Heart left ventricle (tissue), 16 donors: ENCODE measurements at regions of chr7 and their contacts with region 1.

Region 1: GRCh38 chr7:47179812-47180515 is 401.9 kb downstream of the TNS3 start:
- DNase-seq: peak in 3 of 5 donors; percentile 43 to 51 (median 49)
- ATAC-seq: peak in 2 of 4 donors; percentile 47 to 73
- H3K4me3 ChIP-seq: no peak overlapping the region
- H3K27ac ChIP-seq: no peak overlapping the region
- H3K4me1 ChIP-seq: peaks cover 0 to 46% (median 13%) of the 10 kb centered on the region in 12 donors
- H3K27me3 ChIP-seq: no peaks in the 10 kb centered on the region
- CTCF ChIP-seq: peak; percentile 59 to 92 (median 90)
- POLR2A ChIP-seq: no peak

Region 2: DNA sequence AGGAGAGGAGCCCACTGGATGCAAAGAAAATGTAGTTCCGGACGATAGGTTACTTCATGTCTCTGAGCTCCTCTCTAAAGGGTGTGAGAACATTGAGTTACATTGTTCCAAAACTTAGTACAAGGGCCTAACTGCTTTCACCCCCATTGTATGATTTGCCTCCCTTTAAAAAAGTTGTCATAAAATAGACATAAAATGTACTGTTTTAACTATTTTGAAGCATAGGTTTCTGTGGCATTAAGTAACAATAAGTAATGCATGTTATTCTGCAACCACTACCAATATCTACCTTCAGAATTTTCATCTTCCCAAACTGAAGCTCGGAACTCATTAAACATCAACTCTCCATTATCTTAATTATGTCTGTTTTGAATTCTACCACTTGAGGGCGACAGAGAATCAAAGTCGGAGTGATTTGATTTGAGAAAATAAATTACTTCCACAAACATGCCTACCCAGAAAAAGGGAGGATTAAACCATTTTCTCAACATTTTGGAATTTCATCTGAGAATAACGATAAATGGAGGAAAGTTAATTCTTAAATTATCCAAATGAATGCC is 1289.0 kb before region 1 on chr7:
- intact Hi-C with region 1: loop called in 1 of 10 experiments (anchors 2 kb)
- DNase-seq: no peak
- ATAC-seq: no peak
- H3K4me3 ChIP-seq: no peak overlapping the region
- H3K27ac ChIP-seq: no peak overlapping the region
- H3K4me1 ChIP-seq: peaks cover 0 to 11% (median 5%) of the 10 kb centered on the region in 12 donors
- H3K27me3 ChIP-seq: peaks cover 8 to 53% (median 28%) of the 10 kb centered on the region in 9 donors
- CTCF ChIP-seq: peak; percentile 47 to 79 (median 62)
- POLR2A ChIP-seq: no peak

Region 3: GRCh38 chr7:46352004-46352954 is 827.7 kb before region 1 on chr7:
- intact Hi-C with region 1: loop called in 6 of 10 experiments (anchors 5 to 10 kb)
- DNase-seq: peak in 3 of 5 donors; percentile 20 to 45 (median 23)
- ATAC-seq: peak in 2 of 4 donors; percentile 58 to 74
- H3K4me3 ChIP-seq: no peak overlapping the region
- H3K27ac ChIP-seq: no peak overlapping the region
- H3K4me1 ChIP-seq: no peaks in the 10 kb centered on the region
- H3K27me3 ChIP-seq: peaks cover 0 to 3% (median 0%) of the 10 kb centered on the region in 9 donors
- CTCF ChIP-seq: peak; percentile 37 to 77 (median 68)
- POLR2A ChIP-seq: no peak

Region 4: DNA sequence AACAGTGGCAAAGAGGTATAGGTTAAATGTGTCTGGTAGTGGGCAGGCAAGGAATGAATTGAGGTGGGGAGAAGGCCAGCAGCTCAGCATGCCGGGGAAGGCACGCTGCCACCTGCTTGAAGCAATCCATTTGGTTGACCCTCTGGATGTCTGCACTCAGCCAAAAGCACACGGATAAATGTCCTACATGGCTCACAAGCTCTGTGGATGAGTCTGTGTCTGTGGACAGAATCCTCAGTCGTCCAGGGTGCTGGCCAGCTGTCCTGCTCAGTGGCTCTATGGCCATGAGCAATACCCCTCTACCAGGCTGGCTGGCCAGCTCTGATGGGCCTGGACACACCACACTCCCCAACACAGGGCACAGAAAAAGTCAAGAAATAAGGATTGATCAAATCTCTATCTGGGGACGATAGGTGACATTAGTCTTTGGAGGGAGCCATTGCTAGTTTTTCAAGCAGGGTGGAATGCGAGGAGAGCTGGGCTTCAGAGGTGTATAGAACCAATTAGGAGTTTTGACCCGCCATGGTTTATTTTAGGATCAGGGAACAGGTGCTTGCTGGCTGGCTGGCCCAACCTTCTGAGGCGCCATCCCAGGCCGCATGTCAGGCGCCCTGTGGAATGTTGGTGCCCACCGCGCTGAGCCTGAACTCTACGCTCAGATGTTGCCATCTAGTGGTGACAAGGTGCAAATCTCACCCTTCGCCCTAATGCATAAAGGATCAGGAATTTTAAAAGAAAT is 91.5 kb before region 1 on chr7:
- intact Hi-C with region 1: no loop called
- DNase-seq: peak; percentile 41 to 77 (median 62)
- ATAC-seq: peak; percentile 80 to 94 (median 90)
- H3K4me3 ChIP-seq: no peak overlapping the region
- H3K27ac ChIP-seq: peak overlapping the region in 1 of 12 donors; percentile 39
- H3K4me1 ChIP-seq: peaks cover 0 to 12% (median 3%) of the 10 kb centered on the region in 12 donors
- H3K27me3 ChIP-seq: no peaks in the 10 kb centered on the region
- CTCF ChIP-seq: peak; percentile 77 to 96 (median 92)
- POLR2A ChIP-seq: no peak

Region 5: GRCh38 chr7:47100817-47101435 is 79.0 kb before region 1 on chr7:
- intact Hi-C with region 1: loop called in 1 of 10 experiments (anchors 5 kb)
- DNase-seq: peak in 3 of 5 donors; percentile 36 to 37 (median 36)
- ATAC-seq: peak in 3 of 4 donors; percentile 53 to 59 (median 57)
- H3K4me3 ChIP-seq: no peak overlapping the region
- H3K27ac ChIP-seq: no peak overlapping the region
- H3K4me1 ChIP-seq: peaks cover 0 to 6% (median 0%) of the 10 kb centered on the region in 12 donors
- H3K27me3 ChIP-seq: no peaks in the 10 kb centered on the region
- CTCF ChIP-seq: peak in 11 of 12 donors; percentile 31 to 59 (median 45)
- POLR2A ChIP-seq: no peak

Region 6: DNA sequence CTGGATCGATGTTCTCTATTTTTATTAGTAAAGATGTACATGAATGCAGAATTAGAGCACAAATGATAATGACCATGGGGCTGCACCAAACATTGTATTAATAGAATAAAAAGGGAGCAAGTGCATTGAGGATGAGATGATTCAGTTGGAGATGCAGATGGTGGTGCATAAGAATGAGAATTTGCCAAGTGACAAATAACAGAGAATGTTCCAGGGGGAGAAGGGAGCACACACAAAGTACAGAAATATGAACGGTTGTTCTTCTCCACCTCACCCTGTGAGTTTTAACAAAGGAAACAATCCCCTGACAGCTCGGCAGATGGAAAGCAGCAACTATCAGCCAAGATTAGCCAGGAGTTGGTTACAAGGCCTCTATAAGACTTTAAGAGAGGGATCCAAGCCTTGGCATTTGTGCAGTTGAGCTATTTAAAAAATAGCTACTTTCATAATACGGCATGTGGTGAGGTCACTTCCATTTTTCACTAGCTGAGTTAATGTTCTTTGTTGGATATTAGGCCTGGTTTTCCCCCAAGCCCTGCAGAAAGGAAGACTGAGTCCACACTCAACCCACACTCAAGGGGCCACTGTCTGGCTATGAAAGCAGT is 60.6 kb before region 1 on chr7:
- intact Hi-C with region 1: no loop called
- DNase-seq: no peak
- ATAC-seq: no peak
- H3K4me3 ChIP-seq: no peak overlapping the region
- H3K27ac ChIP-seq: peak overlapping the region in 1 of 12 donors; percentile 3
- H3K4me1 ChIP-seq: peaks cover 0 to 3% (median 0%) of the 10 kb centered on the region in 12 donors
- H3K27me3 ChIP-seq: no peaks in the 10 kb centered on the region
- CTCF ChIP-seq: no peak
- POLR2A ChIP-seq: no peak

Region 7: DNA sequence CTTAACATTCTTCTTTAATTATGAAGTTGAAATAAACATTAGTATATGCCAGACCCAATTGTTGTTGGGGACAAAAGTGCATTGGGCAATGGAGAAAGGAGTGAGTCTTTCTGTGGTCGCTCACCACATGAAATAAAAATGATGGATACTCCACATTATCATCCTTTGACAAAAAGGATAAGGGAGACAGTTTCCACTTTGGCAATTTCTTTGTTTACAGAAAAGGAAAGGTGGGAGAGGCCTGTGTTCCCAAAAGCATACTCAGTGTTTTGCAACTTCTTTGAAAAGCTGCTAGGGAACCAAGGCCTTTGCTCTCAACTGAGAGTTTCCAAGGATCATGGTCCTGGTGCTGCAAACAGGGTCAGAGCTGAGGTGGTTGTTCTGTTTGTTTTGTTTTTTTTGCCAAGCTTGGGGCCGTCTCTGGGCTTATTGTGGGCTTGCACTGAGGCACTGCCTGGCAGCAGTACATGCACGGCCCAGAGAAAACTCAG is 60.0 kb after region 1 on chr7:
- intact Hi-C with region 1: loop called in 1 of 10 experiments (anchors 5 kb)
- DNase-seq: no peak
- ATAC-seq: no peak
- H3K4me3 ChIP-seq: no peak overlapping the region
- H3K27ac ChIP-seq: peak overlapping the region in 3 of 12 donors; percentile 20 to 33 (median 26)
- H3K4me1 ChIP-seq: peaks cover 0 to 18% (median 2%) of the 10 kb centered on the region in 12 donors
- H3K27me3 ChIP-seq: no peaks in the 10 kb centered on the region
- CTCF ChIP-seq: no peak
- POLR2A ChIP-seq: no peak

Region 8: GRCh38 chr7:47453093-47454049 is 273.4 kb after region 1 on chr7:
- intact Hi-C with region 1: no loop called
- DNase-seq: peak; percentile 47 to 77 (median 75)
- ATAC-seq: peak; percentile 67 to 81 (median 76)
- H3K4me3 ChIP-seq: peak overlapping the region in 11 of 12 donors; percentile 4 to 53 (median 38)
- H3K27ac ChIP-seq: peak overlapping the region; percentile 58 to 89 (median 83)
- H3K4me1 ChIP-seq: peaks cover 3 to 59% (median 40%) of the 10 kb centered on the region in 12 donors
- H3K27me3 ChIP-seq: no peaks in the 10 kb centered on the region
- CTCF ChIP-seq: no peak
- POLR2A ChIP-seq: no peak

Region 9: GRCh38 chr7:47557169-47557985 is 377.4 kb after region 1 on chr7:
- intact Hi-C with region 1: no loop called
- DNase-seq: no peak
- ATAC-seq: peak; percentile 49 to 77 (median 74)
- H3K4me3 ChIP-seq: no peak overlapping the region
- H3K27ac ChIP-seq: peak overlapping the region in 1 of 12 donors; percentile 17
- H3K4me1 ChIP-seq: peaks cover 0 to 50% (median 6%) of the 10 kb centered on the region in 12 donors
- H3K27me3 ChIP-seq: no peaks in the 10 kb centered on the region
- CTCF ChIP-seq: no peak
- POLR2A ChIP-seq: no peak